SK-N-SH (cell line): ENCODE measurements at regions of chr6 and their contacts with region 1.

Region 1: GRCh38 chr6:151323791-151324487 is 67.4 kb downstream of the ZBTB2 start:
- DNase-seq: peak; percentile 81
- H3K4me3 ChIP-seq: peak overlapping the region in 1 of 2 experiments; percentile 22; a peak in 1 of 4 replicates
- H3K27ac ChIP-seq: peak overlapping the region; percentile 35 to 76
- H3K4me1 ChIP-seq: peaks cover 7 to 14% of the 10 kb centered on the region in 2 experiments; a peak in 3 of 4 replicates
- H3K27me3 ChIP-seq: no peaks in the 10 kb centered on the region
- CTCF ChIP-seq: peak; percentile 90
- EP300 ChIP-seq: no peak
- RAD21 ChIP-seq: peak; percentile 97

Region 2: GRCh38 chr6:150876598-150876997 is 447.3 kb before region 1 on chr6:
- CTCF ChIA-PET with region 1: interaction called, 10 read pairs
- POLR2A ChIA-PET with region 1: no interaction called
- DNase-seq: no peak
- H3K4me3 ChIP-seq: no peak overlapping the region
- H3K27ac ChIP-seq: no peak overlapping the region
- H3K4me1 ChIP-seq: peaks cover 1 to 5% of the 10 kb centered on the region in 2 experiments; a peak in 3 of 4 replicates
- H3K27me3 ChIP-seq: no peaks in the 10 kb centered on the region
- CTCF ChIP-seq: no peak
- EP300 ChIP-seq: no peak
- RAD21 ChIP-seq: no peak

Region 3: DNA sequence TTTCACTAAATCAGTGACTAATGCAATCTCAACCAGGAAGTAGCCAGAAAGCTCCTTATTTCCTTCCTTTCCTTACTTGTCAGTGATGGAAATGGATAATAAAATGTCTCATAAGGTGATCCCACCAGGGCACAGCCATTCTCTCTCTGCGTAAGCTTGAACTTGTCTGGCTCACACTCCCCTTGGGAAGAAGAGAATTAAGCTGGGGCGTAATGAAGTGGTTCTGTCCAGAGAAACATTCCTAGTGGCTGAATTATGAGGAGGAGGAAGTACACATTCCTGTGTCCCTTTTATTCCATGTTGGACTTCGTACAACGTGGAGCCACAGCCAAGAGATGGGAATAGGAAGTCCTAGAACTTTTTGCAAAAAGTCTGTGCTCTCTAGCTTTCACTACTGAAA is 364.8 kb before region 1 on chr6:
- CTCF ChIA-PET with region 1: interaction called, 14 read pairs
- POLR2A ChIA-PET with region 1: no interaction called
- DNase-seq: no peak
- H3K4me3 ChIP-seq: no peak overlapping the region
- H3K27ac ChIP-seq: peak overlapping the region in 1 of 2 experiments; percentile 14; a peak in 1 of 4 replicates
- H3K4me1 ChIP-seq: peaks cover 0 to 6% of the 10 kb centered on the region in 2 experiments; a peak in 1 of 4 replicates
- H3K27me3 ChIP-seq: no peaks in the 10 kb centered on the region
- CTCF ChIP-seq: no peak
- EP300 ChIP-seq: no peak
- RAD21 ChIP-seq: no peak

Region 4: DNA sequence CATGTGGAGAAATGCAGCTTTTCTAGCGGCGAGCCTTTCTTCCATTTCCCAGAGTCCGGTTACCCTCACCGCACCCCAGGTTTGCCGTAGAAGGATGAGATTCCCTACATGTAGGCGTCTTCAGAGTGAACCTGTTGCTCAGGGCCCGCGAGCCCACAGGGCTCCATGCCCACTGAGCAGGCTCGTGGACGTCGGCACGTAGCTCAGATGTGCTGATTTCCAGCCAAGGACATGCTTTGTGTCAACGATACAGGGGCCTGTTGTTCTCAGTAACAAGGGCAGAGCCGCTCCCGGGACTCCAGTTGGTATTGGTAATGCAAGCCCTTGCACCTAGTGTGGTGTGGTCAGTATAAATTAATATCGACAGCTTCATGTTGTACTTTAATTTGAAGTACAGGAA is 298.9 kb before region 1 on chr6:
- CTCF ChIA-PET with region 1: interaction called, 371 read pairs
- POLR2A ChIA-PET with region 1: no interaction called
- DNase-seq: no peak
- H3K4me3 ChIP-seq: no peak overlapping the region
- H3K27ac ChIP-seq: no peak overlapping the region
- H3K4me1 ChIP-seq: no peaks in the 10 kb centered on the region
- H3K27me3 ChIP-seq: no peaks in the 10 kb centered on the region
- CTCF ChIP-seq: no peak
- EP300 ChIP-seq: no peak
- RAD21 ChIP-seq: no peak

Region 5: GRCh38 chr6:151060096-151060765 is 263.7 kb before region 1 on chr6:
- CTCF ChIA-PET with region 1: interaction called, 16 read pairs
- POLR2A ChIA-PET with region 1: no interaction called
- DNase-seq: no peak
- H3K4me3 ChIP-seq: no peak overlapping the region
- H3K27ac ChIP-seq: peak overlapping the region; percentile 72 to 98
- H3K4me1 ChIP-seq: peaks cover 23 to 45% of the 10 kb centered on the region in 2 experiments
- H3K27me3 ChIP-seq: no peaks in the 10 kb centered on the region
- CTCF ChIP-seq: no peak
- EP300 ChIP-seq: peak; percentile 50 to 93
- RAD21 ChIP-seq: no peak

Region 6: DNA sequence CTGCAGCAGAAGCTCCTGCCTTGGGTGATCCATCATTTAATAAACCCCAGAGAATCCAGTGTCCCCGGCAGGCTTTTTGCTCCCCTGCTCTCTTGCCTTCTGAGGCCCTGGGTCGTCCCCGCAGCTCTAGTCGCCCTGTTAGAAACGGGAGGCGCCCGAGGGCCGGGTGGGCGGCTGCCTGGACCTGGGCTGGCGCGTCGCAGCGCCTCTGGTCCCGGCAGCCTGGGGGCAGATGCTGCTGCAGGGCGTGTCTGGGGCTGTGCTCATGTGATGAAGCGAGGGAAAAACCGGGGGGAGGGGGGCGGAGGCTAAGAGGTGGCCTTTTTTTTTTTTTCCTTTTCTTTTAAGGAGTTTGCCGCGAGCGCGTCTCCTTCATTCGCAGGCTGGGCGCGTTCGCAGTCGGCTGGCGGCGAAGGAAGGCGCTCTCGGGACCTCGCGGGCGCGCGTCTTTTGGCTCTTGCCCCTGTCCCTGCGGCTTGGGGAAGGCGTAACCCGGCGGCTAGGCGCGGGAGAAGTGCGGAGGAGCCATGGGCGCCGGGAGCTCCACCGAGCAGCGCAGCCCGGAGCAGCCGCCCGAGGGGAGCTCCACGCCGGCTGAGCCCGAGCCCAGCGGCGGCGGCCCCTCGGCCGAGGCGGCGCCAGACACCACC is 83.8 kb before region 1 on chr6:
- CTCF ChIA-PET with region 1: interaction called, 26 read pairs
- POLR2A ChIA-PET with region 1: interaction called, 4 read pairs
- DNase-seq: peak; percentile 84
- H3K4me3 ChIP-seq: peak overlapping the region; percentile 76
- H3K27ac ChIP-seq: peak overlapping the region; percentile 34 to 55; a peak in 3 of 4 replicates
- H3K4me1 ChIP-seq: peaks cover 7 to 20% of the 10 kb centered on the region in 2 experiments; a peak in 3 of 4 replicates
- H3K27me3 ChIP-seq: no peaks in the 10 kb centered on the region
- CTCF ChIP-seq: peak; percentile 12; the same call in 1 of the 2 replicates
- EP300 ChIP-seq: no peak
- RAD21 ChIP-seq: no peak

Region 7: GRCh38 chr6:151335930-151336329 is 12.0 kb after region 1 on chr6:
- CTCF ChIA-PET with region 1: interaction called, 67 read pairs
- POLR2A ChIA-PET with region 1: no interaction called
- DNase-seq: no peak
- H3K4me3 ChIP-seq: no peak overlapping the region
- H3K27ac ChIP-seq: no peak overlapping the region
- H3K4me1 ChIP-seq: no peaks in the 10 kb centered on the region; a peak in 1 of 4 replicates
- H3K27me3 ChIP-seq: no peaks in the 10 kb centered on the region
- CTCF ChIP-seq: no peak
- EP300 ChIP-seq: no peak
- RAD21 ChIP-seq: no peak